ENCODE measurements at regions of chr14 and their contacts with region 1.

Region 1: DNA sequence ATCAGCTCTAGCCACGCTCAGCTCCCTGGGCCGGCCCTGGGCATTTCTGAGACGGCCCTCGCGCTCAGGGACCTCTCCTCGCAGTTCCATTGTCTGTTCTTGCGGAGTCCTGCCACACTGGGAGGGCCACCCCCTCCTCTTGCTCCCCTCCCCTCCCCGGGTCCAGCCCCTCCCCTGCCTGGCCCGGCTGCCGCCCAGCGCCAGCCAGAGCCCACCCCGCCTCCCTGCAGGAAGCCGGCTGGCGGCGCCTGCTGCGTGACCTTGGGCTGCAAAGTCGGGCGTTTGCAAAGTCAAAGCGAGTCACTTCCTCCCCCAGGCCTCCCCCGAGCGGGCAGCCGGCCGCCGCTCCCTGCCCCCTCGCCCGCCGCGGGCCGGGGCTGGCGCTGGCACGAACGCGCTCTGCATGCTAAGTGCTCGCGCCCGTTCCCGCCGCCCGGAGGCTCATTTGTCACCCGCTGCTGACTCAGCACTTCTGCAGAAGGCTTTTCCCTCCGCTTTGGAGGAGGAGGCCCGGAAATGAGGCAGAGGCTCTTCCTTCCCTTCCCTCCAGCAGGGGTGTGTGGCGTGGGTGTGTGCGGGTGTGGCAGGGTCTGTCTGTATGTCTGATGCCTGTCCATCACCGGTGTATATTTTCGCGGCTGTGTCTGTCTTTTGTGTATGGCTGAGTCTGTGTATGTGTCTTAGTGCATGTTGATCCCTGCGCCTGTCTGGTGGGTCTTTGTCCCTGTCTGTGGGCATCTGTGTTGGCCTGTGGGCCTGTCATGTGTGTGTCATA is 72.0 kb downstream of the IRF2BPL start:
- DNase-seq: peak; percentile 87
- H3K4me3 Mint-ChIP-seq: peak overlapping the region; percentile 78
- H3K27ac Mint-ChIP-seq: peak overlapping the region; percentile 96
- H3K4me1 Mint-ChIP-seq: peaks cover 73% of the 10 kb centered on the region
- H3K27me3 Mint-ChIP-seq: no peaks in the 10 kb centered on the region

Region 2: DNA sequence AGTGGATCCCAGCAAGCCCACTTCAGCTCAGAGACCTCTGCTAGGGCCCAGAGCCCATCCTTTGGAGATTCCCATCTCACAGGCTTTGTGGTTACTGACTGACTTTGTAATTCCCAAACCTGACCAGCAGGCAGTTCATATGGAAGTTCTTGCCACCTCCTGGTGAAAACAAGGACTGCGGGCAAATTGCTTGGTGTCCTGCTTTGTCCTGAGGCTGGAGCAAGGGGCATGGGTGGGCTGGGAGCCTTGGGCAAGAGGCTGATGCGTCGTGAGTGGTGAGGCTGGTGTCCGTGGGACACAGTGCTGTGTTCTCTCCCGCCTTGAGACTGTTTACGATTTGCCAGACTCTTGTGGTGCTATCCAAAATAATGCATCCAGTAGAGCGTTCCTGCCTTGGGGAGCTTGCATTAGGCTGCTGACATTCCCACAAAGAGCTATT is 39.3 kb before region 1 on chr14:
- intact Hi-C with region 1: loop called (anchors 2 kb)
- DNase-seq: no peak
- H3K4me3 Mint-ChIP-seq: no peak overlapping the region
- H3K27ac Mint-ChIP-seq: no peak overlapping the region
- H3K4me1 Mint-ChIP-seq: peaks cover 37% of the 10 kb centered on the region
- H3K27me3 Mint-ChIP-seq: no peaks in the 10 kb centered on the region

Region 3: GRCh38 chr14:76941946-76942805 is 14.3 kb before region 1 on chr14:
- intact Hi-C with region 1: loop called (anchors 1 kb)
- DNase-seq: no peak
- H3K4me3 Mint-ChIP-seq: no peak overlapping the region
- H3K27ac Mint-ChIP-seq: peak overlapping the region; percentile 58
- H3K4me1 Mint-ChIP-seq: peaks cover 25% of the 10 kb centered on the region
- H3K27me3 Mint-ChIP-seq: no peaks in the 10 kb centered on the region

Region 4: DNA sequence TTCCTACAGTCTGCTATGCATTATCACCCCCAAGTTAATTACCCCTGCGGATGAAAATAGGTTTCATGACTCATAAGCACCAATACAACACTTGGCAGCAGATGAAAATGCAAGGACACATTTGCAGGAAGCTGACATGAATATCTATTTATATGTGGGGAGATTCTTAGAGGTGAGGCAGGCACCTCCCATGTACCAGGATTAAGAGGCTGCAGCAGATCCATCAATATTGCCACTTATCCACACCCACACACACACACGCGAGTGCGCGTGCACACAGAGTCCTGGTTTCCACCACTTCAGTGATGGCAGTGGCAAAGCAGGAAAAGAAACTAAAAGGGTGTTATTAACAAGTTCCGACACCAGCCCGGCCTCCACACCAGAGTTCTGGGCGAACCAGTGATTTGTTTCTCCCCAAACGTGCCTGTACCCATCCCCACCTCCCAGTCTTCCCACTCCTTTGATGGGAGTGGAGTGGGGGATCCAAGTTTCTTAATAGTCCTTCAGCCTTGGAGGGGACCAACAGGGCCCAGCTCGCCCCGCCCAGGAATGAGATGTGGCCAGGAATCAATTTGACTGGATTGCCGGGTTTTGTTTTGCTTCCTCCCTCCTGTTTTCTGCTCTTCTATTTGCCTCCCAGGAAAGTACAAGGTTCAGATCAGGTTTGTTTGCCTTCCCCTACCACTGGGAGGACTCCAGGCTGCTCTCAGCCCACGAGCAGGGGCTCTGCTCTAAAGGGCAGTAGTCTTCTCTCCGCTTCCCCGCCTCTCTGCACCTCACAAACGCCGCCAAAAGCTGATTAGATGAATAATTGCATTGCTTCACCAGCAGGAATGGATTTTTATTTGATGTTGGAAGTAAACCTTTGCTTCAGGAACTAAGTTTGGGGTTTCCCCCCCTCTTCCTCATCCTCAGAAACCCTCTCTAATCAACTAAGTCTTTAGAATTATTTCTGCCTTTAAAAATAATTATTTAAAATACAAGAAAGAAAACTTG is 66.8 kb after region 1 on chr14:
- intact Hi-C with region 1: loop called (anchors 1 kb)
- DNase-seq: no peak
- H3K4me3 Mint-ChIP-seq: peak overlapping the region; percentile 43
- H3K27ac Mint-ChIP-seq: peak overlapping the region; percentile 58
- H3K4me1 Mint-ChIP-seq: peaks cover 40% of the 10 kb centered on the region
- H3K27me3 Mint-ChIP-seq: no peaks in the 10 kb centered on the region

Region 5: GRCh38 chr14:77033622-77034521 is 77.4 kb after region 1 on chr14:
- intact Hi-C with region 1: loop called (anchors 2 kb)
- DNase-seq: peak; percentile 77
- H3K4me3 Mint-ChIP-seq: peak overlapping the region; percentile 90
- H3K27ac Mint-ChIP-seq: peak overlapping the region; percentile 99
- H3K4me1 Mint-ChIP-seq: peaks cover 72% of the 10 kb centered on the region
- H3K27me3 Mint-ChIP-seq: no peaks in the 10 kb centered on the region

Region 6: GRCh38 chr14:77097700-77098528 is 141.4 kb after region 1 on chr14 and contains the start of gene CIPC:
- intact Hi-C with region 1: loop called (anchors 2 kb)
- DNase-seq: peak; percentile 100
- H3K4me3 Mint-ChIP-seq: peak within 1 kb of the TSS; percentile 91
- H3K27ac Mint-ChIP-seq: peak within 1 kb of the TSS; percentile 97
- H3K4me1 Mint-ChIP-seq: peaks cover 24% of the 10 kb centered on the region
- H3K27me3 Mint-ChIP-seq: no peaks in the 10 kb centered on the region
- total RNA-seq, gene CIPC: 10.9 and 11.3 TPM in 2 replicates